Calu3 (cell line): ENCODE measurements at regions of chr5 and their contacts with region 1.

Region 1: DNA sequence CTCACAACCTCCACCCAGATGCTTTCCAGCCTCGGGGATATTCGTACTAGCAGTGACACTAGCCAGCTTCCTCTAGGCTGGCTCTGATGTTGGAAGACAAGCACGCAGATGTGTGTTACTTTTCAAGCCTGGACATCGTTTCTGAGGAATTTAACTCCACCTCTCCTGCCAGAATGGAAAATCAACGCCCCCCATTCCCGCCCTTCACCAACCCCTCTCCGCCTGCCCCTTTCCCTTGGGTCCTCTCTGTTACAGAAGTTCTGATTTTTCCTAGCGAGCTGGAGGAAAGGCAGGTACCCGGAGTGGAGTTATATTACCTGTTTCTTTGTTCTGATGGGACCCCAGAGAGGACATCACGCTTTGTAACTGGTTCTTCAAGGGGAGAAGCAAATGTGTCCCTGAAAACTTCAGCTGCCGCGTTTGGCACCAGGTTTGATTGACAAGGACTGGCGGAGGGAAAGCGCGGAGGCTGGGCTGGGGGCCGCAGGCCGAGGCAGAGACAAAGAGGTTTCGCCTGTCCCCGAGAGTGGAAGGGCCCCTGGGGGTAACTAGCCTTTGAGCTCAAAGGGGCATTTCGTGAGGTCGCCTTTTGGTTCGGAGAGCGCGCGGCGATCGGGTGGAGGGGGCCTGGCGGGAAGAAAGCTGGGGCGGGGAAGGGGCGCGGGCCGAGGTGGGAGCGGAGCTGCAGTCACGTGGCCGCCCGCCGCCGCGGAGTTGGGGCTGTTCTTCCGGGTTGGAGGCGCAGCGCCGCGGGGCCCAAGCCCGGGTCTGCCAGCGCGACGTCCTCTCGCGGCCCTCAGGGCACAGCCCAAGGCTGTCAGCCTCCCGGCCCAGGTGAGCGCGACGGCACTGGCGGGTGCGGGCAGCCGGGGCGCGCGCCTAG is at the start of gene NNT:
- DNase-seq: peak; percentile 79
- H3K4me3 Mint-ChIP-seq: peak within 1 kb of the TSS; percentile 89
- H3K27ac Mint-ChIP-seq: peak within 1 kb of the TSS; percentile 53
- H3K4me1 Mint-ChIP-seq: peaks cover 9% of the 10 kb centered on the region
- H3K27me3 Mint-ChIP-seq: no peaks in the 10 kb centered on the region
- CTCF ChIP-seq: no peak
- total RNA-seq, gene NNT: 61.7 and 72.4 TPM in 2 replicates

Region 2: GRCh38 chr5:43156388-43156787 is 446.3 kb before region 1 on chr5:
- CTCF ChIA-PET with region 1: no interaction called
- intact Hi-C with region 1: no loop called
- DNase-seq: no peak
- H3K4me3 Mint-ChIP-seq: no peak overlapping the region
- H3K27ac Mint-ChIP-seq: no peak overlapping the region
- H3K4me1 Mint-ChIP-seq: no peaks in the 10 kb centered on the region
- H3K27me3 Mint-ChIP-seq: no peaks in the 10 kb centered on the region
- CTCF ChIP-seq: no peak

Region 3: DNA sequence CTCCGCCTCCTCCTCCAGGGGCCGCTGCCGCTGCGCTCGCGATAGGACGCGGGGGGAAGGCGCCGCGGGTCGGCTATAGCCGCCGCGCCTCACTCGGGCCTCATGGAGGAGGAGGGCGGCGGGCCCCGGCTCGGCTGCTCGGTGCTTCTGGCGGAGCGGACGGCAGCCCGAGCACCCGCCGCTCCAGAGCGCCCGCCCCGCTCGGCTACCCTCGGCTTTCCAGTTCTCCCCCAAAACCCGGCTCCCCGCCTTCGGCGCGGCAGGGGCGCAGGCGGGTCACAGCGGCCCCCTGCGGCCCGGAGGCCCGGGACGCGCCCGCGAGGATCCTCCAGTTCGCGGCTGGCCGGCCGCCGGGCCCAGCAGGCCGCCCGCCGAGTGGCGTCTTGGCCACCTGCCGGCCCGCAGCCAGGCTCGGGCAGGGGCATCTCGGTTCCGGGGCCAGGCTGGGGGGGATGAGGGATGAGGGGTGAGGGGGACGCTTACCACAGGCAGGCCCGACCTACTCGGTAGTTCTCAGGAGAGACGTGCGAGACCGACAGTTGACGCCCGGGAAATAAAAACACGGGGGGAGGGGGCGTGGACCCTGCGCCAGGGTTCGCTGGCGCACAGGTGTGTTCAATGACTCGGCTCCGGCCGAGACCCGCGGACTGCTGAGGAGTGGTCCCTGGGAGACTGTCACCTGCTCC is 45.7 kb before region 1 on chr5 and contains the start of gene PAIP1:
- CTCF ChIA-PET with region 1: no interaction called
- intact Hi-C with region 1: loop called (anchors 5 kb)
- DNase-seq: peak; percentile 90
- H3K4me3 Mint-ChIP-seq: no peak within 1 kb of the TSS
- H3K27ac Mint-ChIP-seq: peak within 1 kb of the TSS; percentile 88
- H3K4me1 Mint-ChIP-seq: no peaks in the 10 kb centered on the region
- H3K27me3 Mint-ChIP-seq: no peaks in the 10 kb centered on the region
- CTCF ChIP-seq: peak; percentile 33
- total RNA-seq, gene PAIP1: 88.8 and 97.4 TPM in 2 replicates